ENCODE measurements at regions of chr1 and their contacts with region 1.

Region 1: DNA sequence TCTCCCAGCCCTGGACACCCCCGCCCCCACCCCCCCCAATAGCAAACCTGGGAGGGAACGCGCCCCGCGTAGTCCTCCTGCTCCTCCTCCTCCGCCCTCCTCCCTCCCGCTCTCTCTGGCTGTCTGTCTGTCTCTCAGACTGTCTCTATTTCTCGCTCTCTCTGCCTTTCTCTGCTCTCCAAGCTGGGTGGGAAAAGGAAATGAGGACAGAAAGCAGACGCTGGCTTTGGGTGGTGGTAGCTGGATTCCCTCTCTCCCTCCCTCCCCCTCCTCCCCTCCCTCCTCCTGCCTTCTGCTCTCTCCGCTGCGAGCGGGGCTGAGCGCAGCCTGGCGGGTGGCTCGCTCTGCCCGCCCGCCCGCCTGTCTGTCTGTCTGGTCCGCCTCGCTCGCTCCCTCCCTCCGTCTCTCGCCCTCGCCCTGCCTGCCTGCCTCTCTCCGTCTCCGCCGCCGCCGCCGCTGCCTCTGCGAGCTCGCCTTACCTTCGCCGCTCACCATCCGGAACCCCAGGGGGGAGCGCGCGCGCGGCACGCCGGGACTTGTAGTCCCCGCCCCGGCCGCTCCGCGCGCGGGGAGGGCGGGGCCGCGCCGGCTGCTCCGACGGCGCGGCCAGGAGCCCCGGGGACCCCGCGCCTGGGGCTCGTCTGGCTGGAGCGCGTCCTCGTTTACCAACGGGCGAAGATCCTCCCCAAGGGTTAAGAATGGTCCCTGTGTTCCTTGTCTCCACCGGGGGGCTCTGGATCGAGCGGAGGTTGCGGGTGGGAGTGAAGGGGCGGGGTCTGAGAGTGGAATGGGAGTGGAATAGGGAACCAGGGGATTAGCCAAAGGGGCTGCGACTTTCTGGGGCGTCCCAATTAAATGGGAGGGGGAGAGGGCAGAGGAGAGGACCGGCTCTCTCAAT is at the start of gene AHDC1:
- DNase-seq: peak; percentile 89
- H3K4me3 Mint-ChIP-seq: peak within 1 kb of the TSS; percentile 89
- H3K27ac Mint-ChIP-seq: peak within 1 kb of the TSS; percentile 89
- H3K4me1 Mint-ChIP-seq: peaks cover 38% of the 10 kb centered on the region
- H3K27me3 Mint-ChIP-seq: peaks cover 2% of the 10 kb centered on the region
- total RNA-seq, gene AHDC1: 33.7 and 33.9 TPM in 2 replicates

Region 2: DNA sequence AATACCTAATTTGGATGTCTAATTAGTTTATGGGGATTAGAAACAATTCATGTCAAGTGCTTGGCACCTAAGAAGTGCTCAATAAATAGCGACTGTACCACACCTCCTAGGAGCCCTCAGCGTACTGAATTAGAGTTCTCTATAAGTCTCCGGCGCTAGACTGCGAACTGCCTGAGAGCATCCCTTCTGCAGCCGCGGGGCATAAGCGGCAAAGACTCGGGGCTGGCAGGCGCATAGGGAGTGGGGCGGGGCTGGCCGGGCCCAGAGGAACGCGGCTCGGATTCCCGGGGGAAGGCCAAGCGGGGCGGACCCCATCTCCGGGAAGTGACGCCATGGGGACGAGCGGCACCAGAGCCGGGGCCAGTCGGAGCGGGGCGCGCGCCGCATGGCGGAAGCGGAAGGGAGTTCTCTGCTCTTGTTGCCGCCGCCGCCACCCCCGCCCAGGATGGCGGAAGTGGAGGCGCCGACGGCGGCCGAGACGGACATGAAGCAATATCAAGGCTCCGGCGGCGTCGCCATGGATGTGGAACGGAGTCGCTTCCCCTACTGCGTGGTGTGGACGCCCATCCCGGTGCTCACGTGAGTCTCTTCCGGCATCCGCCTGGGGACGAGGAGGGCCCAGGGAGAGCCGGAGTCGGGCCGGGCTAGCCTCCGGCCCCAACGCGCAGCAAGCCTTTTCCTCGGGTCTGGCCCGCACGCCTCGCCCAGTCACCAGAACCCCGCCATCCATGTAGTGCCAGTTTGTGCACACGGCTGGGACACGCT is 281.9 kb before region 1 on chr1 and contains the start of gene TMEM222:
- intact Hi-C with region 1: loop called (anchors 1 kb)
- DNase-seq: peak; percentile 98
- H3K4me3 Mint-ChIP-seq: peak within 1 kb of the TSS; percentile 97
- H3K27ac Mint-ChIP-seq: peak within 1 kb of the TSS; percentile 90
- H3K4me1 Mint-ChIP-seq: peaks cover 33% of the 10 kb centered on the region
- H3K27me3 Mint-ChIP-seq: no peaks in the 10 kb centered on the region
- total RNA-seq, gene TMEM222: 44.3 and 47.4 TPM in 2 replicates

Region 3: GRCh38 chr1:27416387-27417111 is 187.4 kb before region 1 on chr1:
- intact Hi-C with region 1: loop called (anchors 1 kb)
- DNase-seq: peak; percentile 44
- H3K4me3 Mint-ChIP-seq: no peak overlapping the region
- H3K27ac Mint-ChIP-seq: no peak overlapping the region
- H3K4me1 Mint-ChIP-seq: peaks cover 47% of the 10 kb centered on the region
- H3K27me3 Mint-ChIP-seq: no peaks in the 10 kb centered on the region

Region 4: DNA sequence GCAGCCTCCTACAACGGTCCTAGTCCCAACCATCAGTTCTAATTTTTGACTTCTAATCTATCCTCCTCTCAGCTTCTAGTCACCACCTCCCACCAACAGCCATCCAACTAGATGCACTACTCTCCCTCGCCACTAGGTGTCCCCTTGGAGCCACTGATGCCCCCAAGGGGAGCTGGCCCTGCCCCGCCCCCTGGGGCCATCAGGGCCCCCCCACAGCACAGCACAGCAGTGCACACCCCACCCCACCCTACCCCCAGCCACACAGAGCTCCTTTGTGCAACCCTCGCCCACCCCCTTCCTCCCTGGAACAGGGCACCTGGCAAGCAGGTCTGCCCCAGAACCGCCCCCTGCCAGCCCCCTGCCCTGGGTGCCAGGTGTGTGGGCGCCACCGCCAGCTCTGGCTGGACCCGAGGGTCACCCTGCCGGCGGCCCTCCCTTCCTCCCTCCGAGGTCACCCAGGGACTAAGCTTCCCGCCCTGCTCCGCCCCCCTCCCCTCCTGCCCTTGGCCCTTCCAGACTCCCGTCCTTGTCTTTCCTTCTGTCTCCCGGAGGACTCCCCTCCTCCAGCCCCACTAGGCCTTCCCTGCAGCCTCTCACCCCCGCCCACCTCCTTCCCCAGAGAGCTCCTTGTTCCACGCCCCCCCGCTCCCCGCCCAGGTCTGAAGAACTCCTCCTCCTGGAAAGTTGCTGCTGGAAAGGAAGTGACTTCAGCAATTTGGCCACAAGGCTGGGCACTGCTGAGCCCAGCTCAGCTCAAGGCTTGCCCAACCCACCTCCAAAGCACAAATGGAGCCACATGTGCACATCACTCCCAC is 46.9 kb before region 1 on chr1:
- intact Hi-C with region 1: loop called (anchors 1 kb)
- DNase-seq: peak; percentile 65
- H3K4me3 Mint-ChIP-seq: peak overlapping the region; percentile 54
- H3K27ac Mint-ChIP-seq: peak overlapping the region; percentile 84
- H3K4me1 Mint-ChIP-seq: peaks cover 49% of the 10 kb centered on the region
- H3K27me3 Mint-ChIP-seq: no peaks in the 10 kb centered on the region

Region 5: GRCh38 chr1:27725374-27726173 is 121.6 kb after region 1 on chr1 and contains the start of gene FAM76A:
- intact Hi-C with region 1: loop called (anchors 2 kb)
- DNase-seq: peak; percentile 99
- H3K4me3 Mint-ChIP-seq: peak within 1 kb of the TSS; percentile 86
- H3K27ac Mint-ChIP-seq: peak within 1 kb of the TSS; percentile 97
- H3K4me1 Mint-ChIP-seq: peaks cover 29% of the 10 kb centered on the region
- H3K27me3 Mint-ChIP-seq: no peaks in the 10 kb centered on the region
- total RNA-seq, gene FAM76A: 9.9 and 13.1 TPM in 2 replicates

Region 6: GRCh38 chr1:27958513-27959399 is 354.8 kb after region 1 on chr1:
- intact Hi-C with region 1: no loop called
- DNase-seq: no peak
- H3K4me3 Mint-ChIP-seq: peak overlapping the region; percentile 87
- H3K27ac Mint-ChIP-seq: peak overlapping the region; percentile 74
- H3K4me1 Mint-ChIP-seq: peaks cover 15% of the 10 kb centered on the region
- H3K27me3 Mint-ChIP-seq: no peaks in the 10 kb centered on the region